Activated CD8-positive, alpha-beta T cell treated with anti-CD3 and anti-CD28 coated beads, Interleukin-2, amount 10 ng/mL, durations not matched to agents 7 days and 5 days (primary cell): ENCODE measurements at regions of chr2 and their contacts with region 1.

Region 1: GRCh38 chr2:100242891-100243619 is 79.2 kb downstream of the LONRF2 start:
- DNase-seq: peak; percentile 67
- ATAC-seq: peak; percentile 72
- H3K4me3 Mint-ChIP-seq: no peak overlapping the region
- H3K27ac Mint-ChIP-seq: no peak overlapping the region
- H3K4me1 Mint-ChIP-seq: no peaks in the 10 kb centered on the region
- H3K27me3 Mint-ChIP-seq: peaks cover 7% of the 10 kb centered on the region

Region 2: DNA sequence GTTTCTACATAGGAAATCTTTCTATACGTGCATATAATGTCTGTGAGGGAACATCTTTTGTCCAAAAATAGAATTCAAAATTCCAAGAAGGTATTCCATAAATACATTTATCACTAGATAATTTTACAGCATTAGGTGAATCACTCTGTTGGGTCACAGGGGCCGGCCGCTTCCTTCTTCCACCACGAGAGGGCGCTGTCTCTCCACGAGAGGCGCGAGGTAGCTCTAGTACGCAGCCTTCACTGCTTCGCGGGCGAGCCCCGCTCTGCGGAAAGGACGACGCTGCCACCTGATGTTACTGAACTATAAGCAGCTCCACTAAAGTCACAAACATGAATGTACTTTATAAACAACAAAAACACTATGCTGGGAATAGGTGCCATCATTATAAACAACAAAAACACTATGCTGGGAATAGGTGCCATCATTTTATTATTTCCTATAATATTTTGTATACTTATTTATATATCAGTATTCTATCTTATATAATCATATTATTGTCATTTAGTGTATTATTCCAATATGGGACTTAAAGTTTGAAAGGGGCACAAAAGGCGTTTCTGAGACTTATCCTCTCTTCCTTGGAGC is 683.9 kb before region 1 on chr2:
- CTCF ChIA-PET with region 1: interaction called, 13 read pairs
- POLR2A ChIA-PET with region 1: no interaction called
- DNase-seq: peak; percentile 88
- ATAC-seq: peak; percentile 98
- H3K4me3 Mint-ChIP-seq: no peak overlapping the region
- H3K27ac Mint-ChIP-seq: no peak overlapping the region
- H3K4me1 Mint-ChIP-seq: peaks cover 2% of the 10 kb centered on the region
- H3K27me3 Mint-ChIP-seq: peaks cover 11% of the 10 kb centered on the region

Region 3: GRCh38 chr2:99818842-99819241 is 424.2 kb before region 1 on chr2:
- CTCF ChIA-PET with region 1: interaction called, 14 read pairs
- POLR2A ChIA-PET with region 1: no interaction called
- DNase-seq: no peak
- ATAC-seq: no peak
- H3K4me3 Mint-ChIP-seq: no peak overlapping the region
- H3K27ac Mint-ChIP-seq: no peak overlapping the region
- H3K4me1 Mint-ChIP-seq: no peaks in the 10 kb centered on the region
- H3K27me3 Mint-ChIP-seq: peaks cover 6% of the 10 kb centered on the region

Region 4: DNA sequence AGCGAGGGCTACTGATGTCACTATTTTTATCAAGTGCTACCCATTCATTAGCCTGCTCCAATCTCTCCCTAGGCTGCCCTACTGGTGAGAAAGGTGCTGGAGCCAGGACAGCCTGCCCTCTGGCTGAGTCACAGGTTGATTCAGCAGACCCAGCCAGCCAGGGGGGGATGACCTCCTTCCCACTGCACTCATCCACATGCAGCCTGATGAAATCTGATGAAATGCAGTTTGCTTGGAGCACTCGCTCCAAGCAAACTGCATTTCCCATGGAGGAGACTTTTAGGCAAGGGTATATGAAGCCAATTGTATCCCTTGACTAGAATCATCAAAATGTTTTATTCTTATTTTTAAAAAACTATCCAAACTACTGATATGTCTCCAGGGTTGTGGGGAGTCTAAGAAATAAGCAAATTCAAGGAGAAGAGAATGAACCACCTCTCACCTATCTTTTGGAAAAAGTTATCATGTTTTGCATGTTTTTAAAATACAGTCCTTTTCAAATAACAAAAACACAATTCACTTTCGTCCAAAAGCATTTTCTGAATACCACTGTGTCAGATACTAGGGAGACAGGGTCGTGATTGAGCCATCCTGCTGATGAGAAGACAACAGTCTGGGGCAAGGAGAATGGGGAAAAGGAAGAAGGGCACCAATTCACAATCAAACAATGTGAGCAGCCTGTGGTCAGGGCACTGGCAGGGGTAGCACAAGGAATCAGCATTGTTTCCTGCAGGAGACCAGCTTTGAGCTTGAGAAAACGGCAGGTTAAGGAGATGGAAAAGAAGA is 229.0 kb before region 1 on chr2:
- CTCF ChIA-PET with region 1: no interaction called
- POLR2A ChIA-PET with region 1: no interaction called
- DNase-seq: no peak
- ATAC-seq: no peak
- H3K4me3 Mint-ChIP-seq: no peak overlapping the region
- H3K27ac Mint-ChIP-seq: no peak overlapping the region
- H3K4me1 Mint-ChIP-seq: no peaks in the 10 kb centered on the region
- H3K27me3 Mint-ChIP-seq: peaks cover 2% of the 10 kb centered on the region

Region 5: GRCh38 chr2:100365434-100365833 is 122.4 kb after region 1 on chr2:
- CTCF ChIA-PET with region 1: no interaction called
- POLR2A ChIA-PET with region 1: no interaction called
- DNase-seq: no peak
- ATAC-seq: no peak
- H3K4me3 Mint-ChIP-seq: no peak overlapping the region
- H3K27ac Mint-ChIP-seq: no peak overlapping the region
- H3K4me1 Mint-ChIP-seq: peaks cover 5% of the 10 kb centered on the region
- H3K27me3 Mint-ChIP-seq: peaks cover 8% of the 10 kb centered on the region